ENCODE measurements at regions of chr11 and their contacts with region 1.

Region 1: GRCh38 chr11:69166218-69167115 is 10.7 kb downstream of the SMIM38 start:
- DNase-seq: peak; percentile 79
- H3K4me3 Mint-ChIP-seq: peak overlapping the region; percentile 27
- H3K27ac Mint-ChIP-seq: peak overlapping the region; percentile 27
- H3K4me1 Mint-ChIP-seq: peaks cover 18% of the 10 kb centered on the region
- H3K27me3 Mint-ChIP-seq: peaks cover 2% of the 10 kb centered on the region

Region 2: GRCh38 chr11:69080257-69080995 is 86.0 kb before region 1 on chr11:
- CTCF ChIA-PET with region 1: no interaction called
- intact Hi-C with region 1: no loop called
- DNase-seq: no peak
- H3K4me3 Mint-ChIP-seq: no peak overlapping the region
- H3K27ac Mint-ChIP-seq: no peak overlapping the region
- H3K4me1 Mint-ChIP-seq: peaks cover 9% of the 10 kb centered on the region
- H3K27me3 Mint-ChIP-seq: no peaks in the 10 kb centered on the region

Region 3: GRCh38 chr11:69115586-69116560 is 50.6 kb before region 1 on chr11:
- CTCF ChIA-PET with region 1: no interaction called
- intact Hi-C with region 1: no loop called
- DNase-seq: no peak
- H3K4me3 Mint-ChIP-seq: no peak overlapping the region
- H3K27ac Mint-ChIP-seq: no peak overlapping the region
- H3K4me1 Mint-ChIP-seq: peaks cover 6% of the 10 kb centered on the region
- H3K27me3 Mint-ChIP-seq: no peaks in the 10 kb centered on the region

Region 4: GRCh38 chr11:69211920-69212571 is 45.6 kb after region 1 on chr11:
- CTCF ChIA-PET with region 1: no interaction called
- intact Hi-C with region 1: loop called (anchors 2 kb)
- DNase-seq: no peak
- H3K4me3 Mint-ChIP-seq: no peak overlapping the region
- H3K27ac Mint-ChIP-seq: no peak overlapping the region
- H3K4me1 Mint-ChIP-seq: peaks cover 23% of the 10 kb centered on the region
- H3K27me3 Mint-ChIP-seq: no peaks in the 10 kb centered on the region